ENCODE measurements at regions of chr1 and their contacts with region 1.

Region 1: DNA sequence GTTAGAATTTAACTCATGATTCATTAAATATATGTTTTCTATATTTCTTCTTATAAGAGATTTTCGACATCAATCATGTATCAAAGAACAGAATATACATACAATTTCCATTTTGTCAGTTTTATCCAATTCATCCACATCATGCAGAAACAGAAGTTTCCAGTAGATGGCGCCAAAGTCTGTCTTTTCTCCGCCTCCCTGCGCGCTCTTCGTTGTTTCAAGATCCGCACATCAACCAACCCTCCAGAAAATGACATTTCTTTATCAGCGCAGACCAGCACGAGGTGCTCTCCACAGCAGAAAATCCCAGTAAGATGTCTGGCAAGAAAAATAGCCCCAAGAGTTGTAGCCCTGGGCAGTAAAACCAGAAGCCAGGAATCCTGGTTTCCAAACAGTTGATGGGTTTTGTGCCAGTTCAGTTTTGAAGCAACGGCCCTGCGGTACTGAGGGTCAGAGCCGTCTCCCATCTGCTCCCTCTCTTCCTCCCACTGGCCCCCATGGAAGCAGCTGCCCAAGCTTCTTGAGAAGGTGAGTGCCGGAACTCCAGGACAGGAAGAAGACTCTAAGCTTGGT is 38.6 kb upstream of the GPR137B start:
- DNase-seq: no peak
- H3K4me3 ChIP-seq: no peak overlapping the region
- H3K27ac ChIP-seq: no peak overlapping the region
- H3K4me1 ChIP-seq: peaks cover 0 to 8% (median 2%) of the 10 kb centered on the region in 6 donors
- H3K27me3 ChIP-seq: peaks cover 0 to 20% (median 0%) of the 10 kb centered on the region in 7 donors
- CTCF ChIP-seq: peak; percentile 71 to 91 (median 84)
- POLR2A ChIP-seq: no peak

Region 2: GRCh38 chr1:235831148-235831547 is 272.6 kb before region 1 on chr1:
- intact Hi-C with region 1: no loop called
- DNase-seq: no peak
- H3K4me3 ChIP-seq: no peak overlapping the region
- H3K27ac ChIP-seq: peak overlapping the region in 1 of 8 donors; percentile 16
- H3K4me1 ChIP-seq: peaks cover 0 to 45% (median 12%) of the 10 kb centered on the region in 6 donors
- H3K27me3 ChIP-seq: no peaks in the 10 kb centered on the region
- CTCF ChIP-seq: no peak
- POLR2A ChIP-seq: no peak

Region 3: DNA sequence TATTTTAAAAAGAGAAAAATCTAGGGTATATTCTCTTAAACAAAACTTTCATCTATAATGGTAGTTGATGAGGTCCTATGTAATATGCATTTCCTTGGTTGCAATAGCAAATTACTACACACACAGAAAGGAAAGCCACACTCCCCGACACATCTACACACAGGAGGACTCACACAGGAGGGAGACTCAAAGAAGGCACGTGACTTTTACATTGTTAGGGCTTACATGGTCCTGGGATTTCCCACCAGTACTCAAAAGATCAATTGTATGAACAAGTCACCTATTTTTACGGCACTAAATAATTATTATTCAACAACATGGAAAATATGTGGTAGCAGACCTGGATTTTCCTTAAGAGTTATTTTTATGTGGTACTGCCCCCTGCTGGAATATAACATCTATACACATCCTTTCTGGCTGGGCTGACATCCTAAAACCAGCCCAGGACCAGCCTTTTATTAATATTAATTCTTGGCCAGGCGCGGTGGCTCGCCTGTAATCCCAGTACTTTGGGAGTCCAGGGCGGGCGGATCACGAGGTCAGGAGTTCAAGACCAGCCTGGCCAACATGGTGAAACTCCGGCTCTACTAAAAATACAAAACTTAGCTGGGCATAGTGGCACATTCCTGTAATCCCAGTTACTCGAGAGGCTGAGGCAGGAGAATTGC is 386.1 kb after region 1 on chr1:
- intact Hi-C with region 1: loop called (anchors 5 kb)
- DNase-seq: no peak
- H3K4me3 ChIP-seq: peak overlapping the region in 2 of 8 donors; percentile 21 to 41
- H3K27ac ChIP-seq: peak overlapping the region in 6 of 8 donors; percentile 3 to 73 (median 66)
- H3K4me1 ChIP-seq: peaks cover 0 to 25% (median 13%) of the 10 kb centered on the region in 6 donors
- H3K27me3 ChIP-seq: peaks cover 0 to 13% (median 0%) of the 10 kb centered on the region in 7 donors
- CTCF ChIP-seq: peak; percentile 41 to 83 (median 70)
- POLR2A ChIP-seq: no peak

Region 4: GRCh38 chr1:236868625-236869467 is 765.1 kb after region 1 on chr1:
- intact Hi-C with region 1: loop called (anchors 5 kb)
- DNase-seq: no peak
- H3K4me3 ChIP-seq: no peak overlapping the region
- H3K27ac ChIP-seq: peak overlapping the region in 3 of 8 donors; percentile 65 to 79 (median 71)
- H3K4me1 ChIP-seq: peaks cover 0 to 22% (median 7%) of the 10 kb centered on the region in 6 donors
- H3K27me3 ChIP-seq: no peaks in the 10 kb centered on the region
- CTCF ChIP-seq: peak; percentile 73 to 96 (median 93)
- POLR2A ChIP-seq: no peak

Region 5: DNA sequence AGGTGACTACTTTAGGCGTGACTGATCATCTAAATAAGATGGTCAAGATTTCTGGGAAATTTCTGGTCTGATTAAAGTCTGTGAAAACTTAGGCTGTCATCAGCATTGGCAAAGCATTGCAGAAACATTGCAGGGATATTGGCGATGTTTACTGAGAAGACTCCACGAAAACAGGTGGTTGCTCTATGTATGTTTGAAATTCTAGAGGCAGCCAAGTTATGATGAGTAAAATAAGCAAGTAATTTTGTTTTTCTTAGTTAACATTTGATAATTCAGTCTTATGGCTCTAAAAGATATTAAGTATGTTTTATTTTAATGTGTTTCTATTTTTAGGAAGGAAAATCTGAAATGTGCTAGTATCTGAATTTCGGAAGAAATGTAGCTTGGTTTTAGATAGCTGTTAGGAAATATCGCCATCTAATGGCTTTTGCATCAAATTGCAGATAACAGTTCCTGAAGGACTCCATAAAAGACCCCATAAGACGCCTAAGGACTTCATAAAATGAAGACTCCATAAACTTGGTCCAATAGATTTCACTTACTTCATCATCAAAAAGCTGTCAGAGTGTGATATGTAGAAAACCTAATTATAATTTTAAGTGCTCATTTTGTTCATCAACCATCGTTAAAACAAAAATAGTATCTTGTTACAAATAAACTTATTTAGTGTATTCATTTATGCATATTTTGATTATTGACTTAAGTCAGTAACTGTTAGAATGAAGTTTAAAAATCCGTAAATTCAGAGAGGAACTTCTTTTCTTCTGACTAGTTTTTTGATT is 1282.8 kb after region 1 on chr1:
- intact Hi-C with region 1: loop called (anchors 5 kb)
- DNase-seq: no peak
- H3K4me3 ChIP-seq: no peak overlapping the region
- H3K27ac ChIP-seq: no peak overlapping the region
- H3K4me1 ChIP-seq: no peaks in the 10 kb centered on the region
- H3K27me3 ChIP-seq: no peaks in the 10 kb centered on the region
- CTCF ChIP-seq: peak in 9 of 11 experiments; percentile 16 to 73 (median 47)
- POLR2A ChIP-seq: no peak